ENCODE measurements at regions of chr2 and their contacts with region 1.

Region 1: DNA sequence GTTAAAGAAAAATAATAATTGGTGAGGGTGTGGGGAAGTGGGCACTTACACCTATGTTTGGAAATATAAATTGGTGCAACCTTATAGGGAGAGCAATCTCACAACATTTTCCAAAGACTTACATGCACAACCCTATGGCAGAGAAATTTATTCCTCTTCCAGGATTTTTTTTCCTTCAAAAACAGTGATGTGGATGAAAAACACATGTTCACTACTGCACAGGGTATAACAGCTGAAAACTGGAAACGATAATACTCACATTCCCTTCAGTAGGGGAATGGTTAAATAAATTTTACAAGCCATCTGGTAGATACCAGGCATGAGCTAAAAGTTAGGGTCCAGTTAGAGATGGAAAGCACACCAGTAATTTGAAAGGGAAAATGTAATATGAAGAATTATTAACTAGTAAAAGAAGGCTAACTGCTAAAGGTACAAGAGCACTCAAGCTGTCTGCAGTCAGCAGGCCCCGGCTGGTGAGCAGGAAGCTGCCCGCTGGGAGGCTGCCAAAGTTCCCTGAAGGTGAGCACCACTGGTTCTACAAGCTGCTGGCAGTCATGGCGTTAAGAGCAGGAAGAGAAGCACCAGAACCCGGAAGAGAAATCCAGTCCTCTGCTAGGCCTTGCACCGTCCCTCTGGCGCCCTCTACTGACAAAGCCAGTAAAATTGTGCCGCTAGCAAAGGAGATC is 28.4 kb upstream of the CASP8 start:
- DNase-seq: peak; percentile 90 to 94 (median 91)
- H3K4me3 ChIP-seq: peak overlapping the region in 1 of 2 donors; percentile 36
- H3K4me3 Mint-ChIP-seq: peak overlapping the region; percentile 62 to 98 (median 96)
- H3K27ac ChIP-seq: peak overlapping the region; percentile 84
- H3K27ac Mint-ChIP-seq: peak overlapping the region; percentile 79 to 96 (median 90)
- H3K4me1 ChIP-seq: peaks cover 47% of the 10 kb centered on the region
- H3K4me1 Mint-ChIP-seq: peaks cover 32 to 63% (median 42%) of the 10 kb centered on the region in 4 donors
- H3K27me3 ChIP-seq: no peaks in the 10 kb centered on the region
- H3K27me3 Mint-ChIP-seq: no peaks in the 10 kb centered on the region

Region 2: GRCh38 chr2:200811336-200812121 is 420.4 kb before region 1 on chr2 and contains the start of gene BZW1:
- CTCF ChIA-PET with region 1: no interaction called
- POLR2A ChIA-PET with region 1: no interaction called
- intact Hi-C with region 1: loop called (anchors 1 kb)
- DNase-seq: peak; percentile 97 to 98 (median 98)
- H3K4me3 ChIP-seq: peak within 1 kb of the TSS; percentile 58 to 67
- H3K4me3 Mint-ChIP-seq: peak within 1 kb of the TSS; percentile 95 to 100 (median 98)
- H3K27ac ChIP-seq: peak within 1 kb of the TSS; percentile 97
- H3K27ac Mint-ChIP-seq: peak within 1 kb of the TSS; percentile 96 to 99 (median 98)
- H3K4me1 ChIP-seq: peaks cover 41% of the 10 kb centered on the region
- H3K4me1 Mint-ChIP-seq: peaks cover 35 to 62% (median 43%) of the 10 kb centered on the region in 4 donors
- H3K27me3 ChIP-seq: no peaks in the 10 kb centered on the region
- H3K27me3 Mint-ChIP-seq: no peaks in the 10 kb centered on the region
- total RNA-seq, gene BZW1: 126 to 133 TPM

Region 3: DNA sequence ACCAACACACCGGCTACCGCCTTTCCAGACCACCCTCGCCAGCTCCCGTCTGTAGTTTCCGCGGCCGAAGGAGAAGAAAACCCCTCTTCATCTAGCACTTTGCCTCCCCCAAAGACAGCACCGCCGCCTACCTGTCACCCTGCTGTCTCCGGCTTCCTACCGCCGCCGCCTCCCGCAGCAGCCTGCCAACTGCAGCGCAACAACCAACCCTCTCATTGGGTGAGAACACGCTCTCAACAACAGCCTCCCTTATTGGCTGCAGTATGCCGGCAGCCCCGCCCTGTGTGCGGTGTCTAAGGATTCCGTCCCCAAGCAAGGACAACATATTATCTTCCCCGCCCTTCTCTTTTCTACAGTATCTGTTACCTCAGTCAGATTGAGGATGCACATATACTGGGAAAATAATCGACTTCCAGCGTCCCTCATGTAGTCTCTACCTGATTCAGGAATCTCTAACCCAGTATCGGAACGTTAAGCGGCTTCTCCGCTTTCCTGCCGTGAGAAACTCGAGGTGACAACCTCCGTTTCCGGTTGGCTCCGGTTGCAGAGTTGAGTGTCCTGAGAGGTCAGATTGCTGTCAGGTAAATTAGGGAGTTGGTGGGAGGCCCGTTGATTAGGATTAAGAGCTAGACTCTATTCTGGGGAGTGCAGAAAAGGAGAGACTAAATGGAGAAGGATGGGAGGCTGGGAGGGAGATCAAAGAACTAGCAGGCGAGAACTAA is 160.3 kb before region 1 on chr2 and contains the starts of genes HYCC2 and NDUFB3:
- CTCF ChIA-PET with region 1: interaction called, 34 read pairs
- POLR2A ChIA-PET with region 1: interaction called, 10 read pairs
- intact Hi-C with region 1: loop called (anchors 1 kb)
- DNase-seq: peak; percentile 95 to 96 (median 95)
- H3K4me3 ChIP-seq: peak within 1 kb of the TSS; percentile 94 to 96
- H3K4me3 Mint-ChIP-seq: peak within 1 kb of the TSS; percentile 91 to 100 (median 98)
- H3K27ac ChIP-seq: peak within 1 kb of the TSS; percentile 79
- H3K27ac Mint-ChIP-seq: peak within 1 kb of the TSS; percentile 94 to 99 (median 98)
- H3K4me1 ChIP-seq: peaks cover 52% of the 10 kb centered on the region
- H3K4me1 Mint-ChIP-seq: peaks cover 35 to 62% (median 46%) of the 10 kb centered on the region in 4 donors
- H3K27me3 ChIP-seq: no peaks in the 10 kb centered on the region
- H3K27me3 Mint-ChIP-seq: peaks cover 0 to 2% of the 10 kb centered on the region in 2 donors
- total RNA-seq, gene HYCC2: 33.1 to 36.4 TPM
- total RNA-seq, gene NDUFB3: 48.7 to 53.6 TPM

Region 4: DNA sequence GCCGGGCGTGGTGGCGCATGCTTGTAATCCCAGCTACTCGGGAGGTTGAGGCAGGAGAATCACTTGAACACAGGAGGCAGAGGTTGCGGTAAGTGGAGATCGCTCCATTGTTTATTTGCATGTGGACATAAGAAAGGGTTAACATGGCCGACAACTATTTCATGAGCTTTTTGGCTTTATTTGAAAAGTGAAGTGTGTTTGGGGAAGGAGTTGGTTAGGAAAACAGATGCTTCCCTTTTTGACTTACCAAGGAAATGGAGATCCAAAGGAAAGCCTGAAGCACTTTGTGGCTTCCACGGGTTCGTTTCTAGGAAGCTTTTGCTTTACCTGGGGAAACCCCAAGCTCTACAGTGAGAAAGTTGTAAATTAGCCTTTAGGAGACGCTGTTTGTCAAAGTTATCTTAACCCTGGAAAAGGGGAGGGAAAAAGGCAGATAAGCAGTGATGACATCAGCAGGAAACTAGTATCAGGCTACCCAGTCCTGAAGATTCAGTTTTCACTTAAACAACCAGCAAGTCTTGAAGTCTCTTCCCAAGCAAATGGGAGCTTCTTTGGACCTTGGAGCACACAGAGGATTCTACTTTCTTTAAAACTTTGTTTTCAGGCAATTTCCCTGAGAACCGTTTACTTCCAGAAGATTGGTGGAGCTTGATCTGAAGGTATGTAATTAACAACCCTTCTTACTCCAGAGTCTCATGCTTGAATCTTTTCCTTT is 49.1 kb before region 1 on chr2 and contains the start of gene CASP10:
- CTCF ChIA-PET with region 1: interaction called, 280 read pairs
- POLR2A ChIA-PET with region 1: interaction called, 109 read pairs
- intact Hi-C with region 1: loop called (anchors 1 kb)
- DNase-seq: peak; percentile 62 to 81 (median 76)
- H3K4me3 ChIP-seq: peak within 1 kb of the TSS; percentile 54 to 87
- H3K4me3 Mint-ChIP-seq: peak within 1 kb of the TSS; percentile 90 to 99 (median 96)
- H3K27ac ChIP-seq: peak within 1 kb of the TSS; percentile 75
- H3K27ac Mint-ChIP-seq: peak within 1 kb of the TSS; percentile 92 to 98 (median 96)
- H3K4me1 ChIP-seq: peaks cover 37% of the 10 kb centered on the region
- H3K4me1 Mint-ChIP-seq: peaks cover 28 to 54% (median 40%) of the 10 kb centered on the region in 4 donors
- H3K27me3 ChIP-seq: no peaks in the 10 kb centered on the region
- H3K27me3 Mint-ChIP-seq: no peaks in the 10 kb centered on the region
- total RNA-seq, gene CASP10: 30.6 to 36.6 TPM

Region 5: GRCh38 chr2:201257956-201258665 is 26.2 kb after region 1 on chr2:
- CTCF ChIA-PET with region 1: interaction called, 108 read pairs
- POLR2A ChIA-PET with region 1: interaction called, 249 read pairs
- intact Hi-C with region 1: loop called (anchors 1 kb)
- DNase-seq: peak; percentile 95 to 99 (median 98)
- H3K4me3 ChIP-seq: peak overlapping the region; percentile 57 to 58
- H3K4me3 Mint-ChIP-seq: peak overlapping the region; percentile 89 to 93 (median 92)
- H3K27ac ChIP-seq: peak overlapping the region; percentile 86
- H3K27ac Mint-ChIP-seq: peak overlapping the region; percentile 95 to 100 (median 99)
- H3K4me1 ChIP-seq: peaks cover 79% of the 10 kb centered on the region
- H3K4me1 Mint-ChIP-seq: peaks cover 40 to 81% (median 61%) of the 10 kb centered on the region in 4 donors
- H3K27me3 ChIP-seq: no peaks in the 10 kb centered on the region
- H3K27me3 Mint-ChIP-seq: no peaks in the 10 kb centered on the region

Region 6: GRCh38 chr2:201444746-201445465 is 213.0 kb after region 1 on chr2:
- CTCF ChIA-PET with region 1: interaction called, 11 read pairs
- POLR2A ChIA-PET with region 1: interaction called, 4 read pairs
- intact Hi-C with region 1: loop called (anchors 2 kb)
- DNase-seq: no peak
- H3K4me3 ChIP-seq: no peak overlapping the region
- H3K4me3 Mint-ChIP-seq: no peak overlapping the region
- H3K27ac ChIP-seq: no peak overlapping the region
- H3K27ac Mint-ChIP-seq: no peak overlapping the region
- H3K4me1 ChIP-seq: peaks cover 58% of the 10 kb centered on the region
- H3K4me1 Mint-ChIP-seq: peaks cover 42 to 65% (median 54%) of the 10 kb centered on the region in 4 donors
- H3K27me3 ChIP-seq: no peaks in the 10 kb centered on the region
- H3K27me3 Mint-ChIP-seq: no peaks in the 10 kb centered on the region

Region 7: GRCh38 chr2:202265467-202266277 is 1033.7 kb after region 1 on chr2 and contains the start of gene NOP58:
- CTCF ChIA-PET with region 1: no interaction called
- POLR2A ChIA-PET with region 1: no interaction called
- intact Hi-C with region 1: loop called (anchors 10 kb)
- DNase-seq: peak; percentile 91 to 96 (median 94)
- H3K4me3 ChIP-seq: peak within 1 kb of the TSS; percentile 92 to 97
- H3K4me3 Mint-ChIP-seq: peak within 1 kb of the TSS in 6 of 8 donors; percentile 55 to 79 (median 67)
- H3K27ac ChIP-seq: peak within 1 kb of the TSS; percentile 99
- H3K27ac Mint-ChIP-seq: peak within 1 kb of the TSS in 5 of 7 donors; percentile 48 to 91 (median 72)
- H3K4me1 ChIP-seq: peaks cover 39% of the 10 kb centered on the region
- H3K4me1 Mint-ChIP-seq: peaks cover 9 to 35% (median 16%) of the 10 kb centered on the region in 4 donors
- H3K27me3 ChIP-seq: no peaks in the 10 kb centered on the region
- H3K27me3 Mint-ChIP-seq: no peaks in the 10 kb centered on the region
- total RNA-seq, gene NOP58: 114 to 123 TPM